AG04450 (cell line): ENCODE measurements at regions of chr6 and their contacts with region 1.

Region 1: GRCh38 chr6:155327326-155328073 is 13.2 kb upstream of the TFB1M start:
- DNase-seq: peak; percentile 56
- H3K4me3 ChIP-seq: no peak overlapping the region
- H3K27ac ChIP-seq: no peak overlapping the region
- H3K27me3 ChIP-seq: no peaks in the 10 kb centered on the region
- CTCF ChIP-seq: peak; percentile 73

Region 2: GRCh38 chr6:155309150-155309549 is 18.4 kb before region 1 on chr6:
- CTCF ChIA-PET with region 1: no interaction called
- POLR2A ChIA-PET with region 1: no interaction called
- DNase-seq: no peak
- H3K4me3 ChIP-seq: no peak overlapping the region
- H3K27ac ChIP-seq: no peak overlapping the region
- H3K27me3 ChIP-seq: no peaks in the 10 kb centered on the region
- CTCF ChIP-seq: no peak

Region 3: DNA sequence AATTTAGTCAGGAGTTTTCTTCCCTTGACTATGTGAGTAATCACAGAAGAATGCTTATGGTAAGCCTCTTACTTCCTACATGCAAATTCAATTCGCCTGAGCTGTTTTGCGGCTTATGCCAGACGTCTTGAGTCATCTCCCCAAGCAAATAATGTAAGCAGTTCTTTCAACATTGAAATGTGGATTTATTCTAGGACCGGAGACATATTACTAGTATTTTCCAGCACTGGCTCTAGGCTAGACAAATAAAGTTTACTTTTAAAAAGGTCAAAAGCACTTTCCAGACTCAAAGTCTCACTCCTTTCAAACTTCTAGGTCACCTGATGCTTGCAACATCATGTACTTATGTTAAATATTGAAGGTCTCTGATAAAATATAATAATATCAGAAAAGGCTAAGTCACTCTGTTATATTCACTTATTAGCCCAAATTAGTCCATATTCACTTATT is 166.2 kb after region 1 on chr6:
- CTCF ChIA-PET with region 1: interaction called, 46 read pairs
- POLR2A ChIA-PET with region 1: no interaction called
- DNase-seq: peak; percentile 98
- H3K4me3 ChIP-seq: no peak overlapping the region
- H3K27ac ChIP-seq: peak overlapping the region; percentile 90
- H3K27me3 ChIP-seq: no peaks in the 10 kb centered on the region
- CTCF ChIP-seq: no peak

Region 4: DNA sequence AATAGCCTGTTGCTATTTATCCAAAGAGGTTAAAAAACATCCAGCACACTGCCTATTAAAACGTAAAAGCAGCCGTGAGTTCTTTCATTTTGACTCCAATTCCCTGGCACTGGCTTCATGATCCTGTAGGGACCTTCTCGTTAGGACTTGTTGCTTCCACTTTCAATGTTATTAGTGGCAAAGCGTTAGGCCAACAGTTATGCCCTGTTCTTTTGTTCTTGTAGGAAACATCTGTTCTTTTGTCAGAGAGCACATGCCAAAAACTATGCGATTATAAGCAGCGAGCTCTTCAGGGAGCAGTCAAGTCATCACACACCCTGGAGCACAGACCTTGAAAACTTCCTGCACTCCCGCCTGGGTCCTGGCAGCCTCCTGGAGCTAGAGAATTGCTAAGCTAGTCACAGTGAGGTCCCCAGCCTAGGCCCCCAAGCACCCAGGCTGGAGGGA is 840.1 kb after region 1 on chr6:
- CTCF ChIA-PET with region 1: no interaction called
- POLR2A ChIA-PET with region 1: interaction called, 10 read pairs
- DNase-seq: no peak
- H3K4me3 ChIP-seq: peak overlapping the region; percentile 54
- H3K27ac ChIP-seq: no peak overlapping the region
- H3K27me3 ChIP-seq: no peaks in the 10 kb centered on the region
- CTCF ChIP-seq: no peak